ENCODE measurements at regions of chr2 and their contacts with region 1.

Region 1: GRCh38 chr2:178112202-178113152 is at the start of gene RBM45:
- DNase-seq: peak; percentile 95
- H3K4me3 ChIP-seq: peak within 1 kb of the TSS; percentile 94 to 98
- H3K27ac ChIP-seq: peak within 1 kb of the TSS; percentile 45 to 77; a peak in 3 of 4 replicates
- H3K4me1 ChIP-seq: peaks cover 9% of the 10 kb centered on the region in 2 experiments; a peak in 3 of 4 replicates
- H3K27me3 ChIP-seq: no peaks in the 10 kb centered on the region
- CTCF ChIP-seq: peak; percentile 96
- EP300 ChIP-seq: peak in 1 of 2 experiments; percentile 63; a peak in 2 of 4 replicates
- RAD21 ChIP-seq: peak; percentile 51
- polyA plus RNA-seq, gene RBM45: 7.0 and 8.1 TPM in 2 replicates

Region 2: GRCh38 chr2:177983183-177983788 is 129.2 kb before region 1 on chr2:
- CTCF ChIA-PET with region 1: interaction called, 35 read pairs
- POLR2A ChIA-PET with region 1: no interaction called
- DNase-seq: peak; percentile 70
- H3K4me3 ChIP-seq: no peak overlapping the region; a peak in 1 of 4 replicates
- H3K27ac ChIP-seq: no peak overlapping the region
- H3K4me1 ChIP-seq: peaks cover 6 to 12% of the 10 kb centered on the region in 2 experiments
- H3K27me3 ChIP-seq: no peaks in the 10 kb centered on the region
- CTCF ChIP-seq: peak; percentile 96
- EP300 ChIP-seq: no peak
- RAD21 ChIP-seq: peak; percentile 90

Region 3: DNA sequence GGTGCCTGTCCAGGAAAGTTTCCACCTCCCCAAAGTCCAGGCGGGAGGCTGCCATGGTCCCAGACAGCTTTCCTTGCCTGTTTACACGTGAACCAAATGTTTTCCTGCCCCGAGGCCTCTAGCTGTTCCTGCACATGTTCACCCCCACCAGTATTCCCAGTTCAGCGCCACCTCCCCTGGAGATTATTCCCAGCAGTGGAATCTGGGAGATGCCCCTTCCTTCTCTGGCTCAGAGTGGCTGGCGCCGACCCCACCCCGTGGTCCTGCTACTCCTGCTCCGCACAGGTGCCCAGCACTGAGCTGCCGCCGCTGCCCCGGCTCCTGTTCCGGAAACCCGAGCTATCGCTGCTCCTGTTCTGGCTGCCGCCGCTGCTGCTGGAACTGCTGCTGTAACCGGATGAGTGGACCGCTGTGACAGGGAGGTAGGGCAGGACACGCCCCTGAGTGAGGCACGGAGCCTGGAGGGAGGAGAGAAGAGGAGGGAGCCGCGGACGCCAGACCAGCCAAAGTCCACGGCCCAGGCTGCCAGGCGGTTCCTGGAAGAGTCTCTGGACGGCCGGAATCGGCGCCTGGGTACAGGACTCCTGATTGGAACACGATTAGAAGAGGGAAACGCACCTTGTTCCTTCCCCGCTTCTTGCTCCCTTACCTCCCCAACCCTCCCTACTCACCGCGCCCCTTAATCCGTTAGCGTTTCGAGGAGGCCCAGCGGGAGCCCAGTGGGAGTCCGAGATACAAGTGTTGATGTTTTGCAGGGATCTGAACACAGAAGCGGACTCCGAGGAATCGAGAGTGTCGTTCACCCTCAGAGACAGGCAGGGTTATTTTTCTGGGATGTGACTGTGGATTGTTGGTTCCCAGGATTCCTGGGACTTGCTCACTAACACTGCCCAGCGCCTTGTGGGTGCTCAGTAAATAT is 39.8 kb before region 1 on chr2 and contains the start of gene PDE11A:
- CTCF ChIA-PET with region 1: interaction called, 13 read pairs
- POLR2A ChIA-PET with region 1: no interaction called
- DNase-seq: peak; percentile 87
- H3K4me3 ChIP-seq: peak within 1 kb of the TSS; percentile 59 to 67
- H3K27ac ChIP-seq: peak within 1 kb of the TSS; percentile 31 to 92
- H3K4me1 ChIP-seq: peaks cover 8 to 17% of the 10 kb centered on the region in 2 experiments; a peak in 3 of 4 replicates
- H3K27me3 ChIP-seq: no peaks in the 10 kb centered on the region
- CTCF ChIP-seq: no peak
- EP300 ChIP-seq: peak in 1 of 2 experiments; percentile 26; a peak in 1 of 4 replicates
- RAD21 ChIP-seq: 0 out of 2 replicates have a peak, but pooled peaks have one; percentile 4
- polyA plus RNA-seq, gene PDE11A: 0.10 and 0.18 TPM in 2 replicates

Region 4: DNA sequence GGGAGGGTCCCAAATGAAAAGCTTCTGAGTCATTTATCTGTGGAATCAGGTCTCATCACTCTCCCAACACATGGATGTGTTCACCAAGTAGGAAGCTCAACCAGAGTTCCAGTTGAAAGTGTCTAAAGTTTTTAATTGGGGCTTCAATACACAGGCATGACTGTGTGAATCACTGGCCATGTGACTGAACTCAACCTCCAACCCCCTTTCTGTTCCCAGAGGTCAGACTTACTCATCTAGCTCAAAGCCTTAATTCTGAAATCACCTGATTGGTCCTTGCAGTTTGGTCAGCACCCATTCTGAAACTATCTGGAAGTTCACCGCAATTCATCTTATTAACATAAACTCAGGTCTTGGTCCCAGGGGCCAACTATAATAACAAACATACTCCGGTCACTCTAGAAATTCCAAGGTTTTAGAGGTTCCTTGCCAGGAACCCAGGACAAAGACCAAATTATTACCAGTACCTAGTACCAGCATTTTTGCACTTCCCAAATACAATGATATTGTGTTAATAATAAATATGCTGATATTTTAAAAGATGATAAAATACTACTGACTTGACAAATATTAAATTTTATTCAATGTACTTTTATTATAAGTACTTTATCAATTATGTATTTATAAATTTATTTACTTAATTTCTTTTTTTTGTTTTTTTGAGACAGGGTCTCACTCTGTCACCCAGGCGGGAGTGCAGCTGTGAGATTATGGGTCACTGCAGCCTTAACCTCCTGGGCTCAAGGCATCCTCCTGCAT is 11.0 kb before region 1 on chr2:
- CTCF ChIA-PET with region 1: interaction called, 14 read pairs
- POLR2A ChIA-PET with region 1: no interaction called
- DNase-seq: no peak
- H3K4me3 ChIP-seq: no peak overlapping the region
- H3K27ac ChIP-seq: no peak overlapping the region
- H3K4me1 ChIP-seq: no peaks in the 10 kb centered on the region
- H3K27me3 ChIP-seq: no peaks in the 10 kb centered on the region
- CTCF ChIP-seq: no peak
- EP300 ChIP-seq: no peak
- RAD21 ChIP-seq: no peak

Region 5: GRCh38 chr2:178128836-178129630 is 16.6 kb after region 1 on chr2:
- CTCF ChIA-PET with region 1: interaction called, 153 read pairs
- POLR2A ChIA-PET with region 1: no interaction called
- DNase-seq: no peak
- H3K4me3 ChIP-seq: no peak overlapping the region
- H3K27ac ChIP-seq: no peak overlapping the region
- H3K4me1 ChIP-seq: no peaks in the 10 kb centered on the region
- H3K27me3 ChIP-seq: no peaks in the 10 kb centered on the region
- CTCF ChIP-seq: no peak
- EP300 ChIP-seq: no peak
- RAD21 ChIP-seq: no peak

Region 6: GRCh38 chr2:178229927-178230326 is 117.5 kb after region 1 on chr2:
- CTCF ChIA-PET with region 1: no interaction called
- POLR2A ChIA-PET with region 1: no interaction called
- DNase-seq: no peak
- H3K4me3 ChIP-seq: no peak overlapping the region
- H3K27ac ChIP-seq: no peak overlapping the region
- H3K4me1 ChIP-seq: peaks cover 0 to 6% of the 10 kb centered on the region in 2 experiments; a peak in 1 of 4 replicates
- H3K27me3 ChIP-seq: no peaks in the 10 kb centered on the region
- CTCF ChIP-seq: no peak
- EP300 ChIP-seq: no peak
- RAD21 ChIP-seq: no peak